CD4-positive, alpha-beta T cell (primary cell): ENCODE measurements at regions of chr3 and their contacts with region 1.

Region 1: DNA sequence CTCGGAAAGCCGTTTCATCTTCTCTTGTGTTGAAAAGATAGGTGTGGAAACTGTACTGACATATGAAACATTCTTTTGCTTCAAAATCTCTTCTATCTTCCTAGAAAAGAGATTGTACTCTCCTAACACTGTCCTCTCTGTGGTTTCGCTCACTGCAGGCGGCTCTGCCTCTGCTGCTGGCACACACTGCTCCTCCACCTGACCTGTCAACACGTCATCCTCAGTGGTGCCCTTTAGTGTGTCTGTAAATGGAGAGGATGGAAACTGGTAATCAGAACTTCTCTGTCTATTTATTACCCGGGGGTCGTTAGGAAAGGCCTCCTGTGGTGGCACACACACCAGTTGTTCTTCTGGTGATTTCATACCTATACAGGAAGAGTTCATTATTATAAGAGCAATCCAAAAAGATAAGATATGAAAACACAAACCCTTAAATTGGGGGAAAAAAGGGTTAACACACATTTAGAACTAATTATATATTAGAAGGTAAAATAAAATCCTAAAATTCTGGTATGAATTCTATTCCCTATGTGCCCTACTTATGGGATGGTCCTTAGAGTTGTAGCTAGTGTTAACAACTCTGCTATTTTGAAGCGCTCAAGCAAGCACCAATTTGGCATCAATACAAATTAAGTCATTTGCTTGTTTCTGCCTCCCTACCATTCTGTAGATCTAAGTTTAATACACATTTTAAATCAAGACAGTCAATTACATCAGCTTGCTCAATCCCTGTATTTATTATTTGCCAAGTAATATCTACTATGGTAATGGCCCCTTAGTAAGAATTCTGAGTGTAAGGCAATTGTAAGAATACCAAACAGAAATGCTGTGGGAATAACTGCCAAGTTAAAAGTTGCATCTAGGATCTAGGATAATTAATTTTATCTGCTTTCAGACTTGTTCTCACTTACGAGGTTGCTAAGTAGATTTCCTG is 49.2 kb downstream of the TASOR start:
- DNase-seq: no peak
- ATAC-seq: no peak
- H3K4me3 ChIP-seq: no peak overlapping the region
- H3K4me3 Mint-ChIP-seq: no peak overlapping the region
- H3K27ac ChIP-seq: no peak overlapping the region
- H3K27ac Mint-ChIP-seq: peak overlapping the region; percentile 82
- H3K4me1 ChIP-seq: no peaks in the 10 kb centered on the region
- H3K4me1 Mint-ChIP-seq: peaks cover 13% of the 10 kb centered on the region
- H3K27me3 ChIP-seq: no peaks in the 10 kb centered on the region
- H3K27me3 Mint-ChIP-seq: no peaks in the 10 kb centered on the region
- CTCF ChIP-seq: no peak

Region 2: DNA sequence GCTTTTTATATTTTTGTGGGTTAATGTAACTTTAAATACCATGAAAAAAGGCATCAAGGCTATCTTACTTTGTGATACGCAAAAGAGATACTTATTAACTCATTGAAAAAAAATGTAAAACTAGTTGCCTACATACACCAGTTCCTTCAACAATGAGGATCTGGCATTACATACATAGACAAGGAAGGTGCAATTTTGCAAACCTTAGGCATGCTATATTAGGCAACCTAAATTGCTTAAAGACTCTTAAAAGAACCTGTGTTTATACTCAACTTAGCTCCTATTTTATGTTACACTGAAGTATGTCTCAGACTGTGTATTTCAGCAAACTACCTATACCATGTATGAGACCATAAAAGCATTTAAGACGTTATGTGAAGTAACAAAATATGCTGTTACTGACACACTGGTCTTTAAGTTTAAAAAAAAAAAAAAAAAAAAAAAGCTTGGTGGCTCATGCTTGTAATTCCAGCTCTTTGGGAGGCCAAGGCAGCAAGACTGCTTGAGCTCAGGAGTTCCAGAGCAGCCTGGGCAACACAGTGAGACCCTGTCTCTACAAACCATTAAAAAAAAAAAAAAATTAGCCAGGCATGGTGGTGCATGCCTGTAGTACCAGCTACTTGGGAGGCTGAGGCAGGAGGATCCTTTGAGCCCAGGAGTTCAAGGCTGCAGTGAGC is 40.0 kb after region 1 on chr3:
- CTCF ChIA-PET with region 1: no interaction called
- POLR2A ChIA-PET with region 1: no interaction called
- intact Hi-C with region 1: loop called in 1 of 2 experiments (anchors 5 kb)
- DNase-seq: no peak
- ATAC-seq: no peak
- H3K4me3 ChIP-seq: no peak overlapping the region
- H3K4me3 Mint-ChIP-seq: no peak overlapping the region
- H3K27ac ChIP-seq: no peak overlapping the region
- H3K27ac Mint-ChIP-seq: no peak overlapping the region
- H3K4me1 ChIP-seq: peaks cover 16% of the 10 kb centered on the region
- H3K4me1 Mint-ChIP-seq: peaks cover 39% of the 10 kb centered on the region
- H3K27me3 ChIP-seq: no peaks in the 10 kb centered on the region
- H3K27me3 Mint-ChIP-seq: no peaks in the 10 kb centered on the region
- CTCF ChIP-seq: no peak

Region 3: GRCh38 chr3:56702490-56703315 is 68.8 kb after region 1 on chr3:
- CTCF ChIA-PET with region 1: no interaction called
- POLR2A ChIA-PET with region 1: no interaction called
- intact Hi-C with region 1: no loop called
- DNase-seq: peak in 11 of 14 experiments; percentile 14 to 86 (median 40)
- ATAC-seq: peak; percentile 77
- H3K4me3 ChIP-seq: no peak overlapping the region
- H3K4me3 Mint-ChIP-seq: no peak overlapping the region
- H3K27ac ChIP-seq: no peak overlapping the region
- H3K27ac Mint-ChIP-seq: no peak overlapping the region
- H3K4me1 ChIP-seq: peaks cover 12% of the 10 kb centered on the region
- H3K4me1 Mint-ChIP-seq: peaks cover 29% of the 10 kb centered on the region
- H3K27me3 ChIP-seq: no peaks in the 10 kb centered on the region
- H3K27me3 Mint-ChIP-seq: no peaks in the 10 kb centered on the region
- CTCF ChIP-seq: peak; percentile 84

Region 4: GRCh38 chr3:57017459-57017845 is 383.6 kb after region 1 on chr3:
- CTCF ChIA-PET with region 1: no interaction called
- POLR2A ChIA-PET with region 1: no interaction called
- intact Hi-C with region 1: no loop called
- DNase-seq: peak in 2 of 14 experiments; percentile 20 to 33
- ATAC-seq: no peak
- H3K4me3 ChIP-seq: no peak overlapping the region
- H3K4me3 Mint-ChIP-seq: no peak overlapping the region
- H3K27ac ChIP-seq: no peak overlapping the region
- H3K27ac Mint-ChIP-seq: no peak overlapping the region
- H3K4me1 ChIP-seq: no peaks in the 10 kb centered on the region
- H3K4me1 Mint-ChIP-seq: no peaks in the 10 kb centered on the region
- H3K27me3 ChIP-seq: peaks cover 2 to 7% of the 10 kb centered on the region in 2 experiments
- H3K27me3 Mint-ChIP-seq: peaks cover 12% of the 10 kb centered on the region
- CTCF ChIP-seq: no peak